Calu3 (cell line): ENCODE measurements at regions of chr10 and their contacts with region 1.

Region 1: DNA sequence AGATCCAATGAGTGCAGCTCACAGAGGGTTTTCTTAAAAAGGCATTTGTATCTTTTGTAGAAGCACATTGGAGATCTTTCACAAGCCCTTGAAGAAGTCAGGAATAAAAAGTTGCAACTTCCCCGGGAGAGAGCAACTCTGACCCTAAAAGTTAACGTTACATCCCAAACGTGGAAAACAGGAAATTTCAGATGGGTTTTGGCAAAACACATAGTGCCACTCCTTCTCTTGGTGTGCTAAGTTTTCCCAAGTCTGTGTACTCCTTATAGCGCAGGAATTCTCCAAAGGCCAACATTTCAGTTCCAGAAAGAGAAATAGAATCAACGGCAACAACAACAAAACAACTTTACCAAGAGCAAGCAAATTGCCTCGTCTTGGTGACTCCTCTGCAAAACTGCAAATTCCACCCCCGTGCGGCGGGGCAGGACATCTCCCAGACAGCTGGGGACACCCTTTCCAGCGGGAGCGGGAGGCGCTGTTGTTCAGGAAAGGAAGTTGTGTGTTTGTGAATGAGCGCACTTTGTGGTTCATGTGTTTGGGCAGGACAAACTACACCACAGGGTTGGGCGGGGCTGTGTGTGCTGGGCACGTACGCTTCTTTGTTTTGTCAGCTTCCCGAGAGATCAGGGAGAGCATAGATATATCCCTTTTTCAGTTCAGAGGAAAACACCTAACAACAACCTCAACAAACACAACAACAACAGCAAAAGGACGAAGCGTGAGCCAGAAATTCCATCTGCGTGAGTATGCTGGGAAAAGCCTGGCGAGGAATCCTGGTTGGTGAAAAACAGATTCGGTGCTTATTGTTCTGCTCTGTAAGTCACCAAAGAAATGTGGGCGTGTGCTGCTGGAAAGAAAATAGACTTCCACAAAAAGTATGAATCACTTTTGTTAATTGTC is 294.7 kb upstream of the PITRM1 start:
- DNase-seq: peak; percentile 83
- H3K4me3 Mint-ChIP-seq: peak overlapping the region; percentile 36
- H3K27ac Mint-ChIP-seq: peak overlapping the region; percentile 86
- H3K4me1 Mint-ChIP-seq: peaks cover 70% of the 10 kb centered on the region
- H3K27me3 Mint-ChIP-seq: no peaks in the 10 kb centered on the region
- CTCF ChIP-seq: peak; percentile 61

Region 2: GRCh38 chr10:3095373-3096139 is 371.7 kb before region 1 on chr10:
- CTCF ChIA-PET with region 1: no interaction called
- intact Hi-C with region 1: no loop called
- DNase-seq: peak; percentile 55
- H3K4me3 Mint-ChIP-seq: peak overlapping the region; percentile 59
- H3K27ac Mint-ChIP-seq: peak overlapping the region; percentile 97
- H3K4me1 Mint-ChIP-seq: peaks cover 64% of the 10 kb centered on the region
- H3K27me3 Mint-ChIP-seq: no peaks in the 10 kb centered on the region
- CTCF ChIP-seq: no peak

Region 3: GRCh38 chr10:3248888-3249758 is 218.2 kb before region 1 on chr10:
- CTCF ChIA-PET with region 1: no interaction called
- intact Hi-C with region 1: loop called (anchors 5 kb)
- DNase-seq: peak; percentile 25
- H3K4me3 Mint-ChIP-seq: no peak overlapping the region
- H3K27ac Mint-ChIP-seq: peak overlapping the region; percentile 61
- H3K4me1 Mint-ChIP-seq: peaks cover 8% of the 10 kb centered on the region
- H3K27me3 Mint-ChIP-seq: peaks cover 36% of the 10 kb centered on the region
- CTCF ChIP-seq: no peak

Region 4: GRCh38 chr10:3636356-3637181 is 169.3 kb after region 1 on chr10:
- CTCF ChIA-PET with region 1: interaction called, 3 read pairs
- intact Hi-C with region 1: loop called (anchors 5 kb)
- DNase-seq: peak; percentile 10
- H3K4me3 Mint-ChIP-seq: peak overlapping the region; percentile 59
- H3K27ac Mint-ChIP-seq: peak overlapping the region; percentile 89
- H3K4me1 Mint-ChIP-seq: peaks cover 54% of the 10 kb centered on the region
- H3K27me3 Mint-ChIP-seq: no peaks in the 10 kb centered on the region
- CTCF ChIP-seq: no peak

Region 5: GRCh38 chr10:3668276-3668965 is 201.1 kb after region 1 on chr10:
- CTCF ChIA-PET with region 1: no interaction called
- intact Hi-C with region 1: loop called (anchors 10 kb)
- DNase-seq: peak; percentile 73
- H3K4me3 Mint-ChIP-seq: peak overlapping the region; percentile 70
- H3K27ac Mint-ChIP-seq: peak overlapping the region; percentile 96
- H3K4me1 Mint-ChIP-seq: no peaks in the 10 kb centered on the region
- H3K27me3 Mint-ChIP-seq: no peaks in the 10 kb centered on the region
- CTCF ChIP-seq: no peak